ENCODE measurements at regions of chr7 and their contacts with region 1.

Region 1: DNA sequence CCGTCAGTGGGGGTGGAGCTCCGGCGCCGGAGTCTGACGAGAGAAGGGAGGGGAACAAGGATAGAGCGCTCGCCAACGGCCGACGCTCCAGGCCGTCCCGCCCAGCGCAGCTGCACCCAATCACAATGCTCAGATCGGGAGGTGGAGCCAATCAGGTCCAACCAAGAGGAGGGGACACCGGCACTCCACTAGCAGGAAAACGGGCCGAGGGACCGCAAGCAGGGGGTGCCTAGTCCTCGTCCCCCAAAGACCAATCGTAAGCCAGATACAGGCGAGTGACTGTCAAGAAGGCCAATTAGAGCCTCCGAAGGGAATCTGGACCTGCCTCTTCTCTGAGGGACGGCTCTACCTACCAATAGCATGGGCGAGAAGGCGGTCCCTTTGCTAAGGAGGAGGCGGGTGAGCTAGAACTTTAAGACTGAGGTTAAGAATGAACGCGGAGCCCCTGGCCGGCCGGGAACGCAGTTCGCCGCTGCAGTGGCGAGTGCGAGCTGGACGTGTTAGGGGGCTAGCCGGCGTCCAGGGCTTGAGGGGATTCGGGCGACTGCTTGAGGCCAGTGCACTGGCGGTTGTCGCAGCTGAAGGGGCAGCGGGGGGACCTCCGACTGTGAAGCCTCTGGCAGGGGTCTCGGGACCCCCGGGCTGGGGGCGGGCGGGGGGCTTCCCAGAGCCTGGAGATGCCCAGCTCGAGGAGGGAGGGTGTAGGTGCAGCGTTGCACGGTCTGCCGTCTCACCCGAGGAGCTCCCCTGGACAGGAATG is at the start of gene FBXO24:
- DNase-seq: peak; percentile 100
- ATAC-seq: peak; percentile 86
- H3K4me3 Mint-ChIP-seq: peak within 1 kb of the TSS; percentile 78
- H3K27ac Mint-ChIP-seq: peak within 1 kb of the TSS; percentile 82
- H3K4me1 Mint-ChIP-seq: peaks cover 26% of the 10 kb centered on the region
- H3K27me3 Mint-ChIP-seq: peaks cover 4% of the 10 kb centered on the region
- total RNA-seq, gene FBXO24: 1.4 to 2.1 TPM

Region 2: GRCh38 chr7:100435401-100436304 is 150.8 kb before region 1 on chr7:
- CTCF ChIA-PET with region 1: interaction called, 3 read pairs
- POLR2A ChIA-PET with region 1: interaction called, 5 read pairs
- intact Hi-C with region 1: loop called in 1 of 2 experiments (anchors 1 kb)
- DNase-seq: peak; percentile 70
- ATAC-seq: peak; percentile 30
- H3K4me3 Mint-ChIP-seq: peak overlapping the region; percentile 89
- H3K27ac Mint-ChIP-seq: peak overlapping the region; percentile 88
- H3K4me1 Mint-ChIP-seq: peaks cover 43% of the 10 kb centered on the region
- H3K27me3 Mint-ChIP-seq: no peaks in the 10 kb centered on the region

Region 3: GRCh38 chr7:100538654-100539435 is 47.6 kb before region 1 on chr7 and contains the start of gene AGFG2:
- CTCF ChIA-PET with region 1: interaction called, 3 read pairs
- POLR2A ChIA-PET with region 1: interaction called, 8 read pairs
- intact Hi-C with region 1: loop called (anchors 1 kb)
- DNase-seq: peak; percentile 100
- ATAC-seq: peak; percentile 92
- H3K4me3 Mint-ChIP-seq: peak within 1 kb of the TSS; percentile 98
- H3K27ac Mint-ChIP-seq: peak within 1 kb of the TSS; percentile 95
- H3K4me1 Mint-ChIP-seq: peaks cover 42% of the 10 kb centered on the region
- H3K27me3 Mint-ChIP-seq: no peaks in the 10 kb centered on the region
- total RNA-seq, gene AGFG2: 49.3 to 49.4 TPM

Region 4: DNA sequence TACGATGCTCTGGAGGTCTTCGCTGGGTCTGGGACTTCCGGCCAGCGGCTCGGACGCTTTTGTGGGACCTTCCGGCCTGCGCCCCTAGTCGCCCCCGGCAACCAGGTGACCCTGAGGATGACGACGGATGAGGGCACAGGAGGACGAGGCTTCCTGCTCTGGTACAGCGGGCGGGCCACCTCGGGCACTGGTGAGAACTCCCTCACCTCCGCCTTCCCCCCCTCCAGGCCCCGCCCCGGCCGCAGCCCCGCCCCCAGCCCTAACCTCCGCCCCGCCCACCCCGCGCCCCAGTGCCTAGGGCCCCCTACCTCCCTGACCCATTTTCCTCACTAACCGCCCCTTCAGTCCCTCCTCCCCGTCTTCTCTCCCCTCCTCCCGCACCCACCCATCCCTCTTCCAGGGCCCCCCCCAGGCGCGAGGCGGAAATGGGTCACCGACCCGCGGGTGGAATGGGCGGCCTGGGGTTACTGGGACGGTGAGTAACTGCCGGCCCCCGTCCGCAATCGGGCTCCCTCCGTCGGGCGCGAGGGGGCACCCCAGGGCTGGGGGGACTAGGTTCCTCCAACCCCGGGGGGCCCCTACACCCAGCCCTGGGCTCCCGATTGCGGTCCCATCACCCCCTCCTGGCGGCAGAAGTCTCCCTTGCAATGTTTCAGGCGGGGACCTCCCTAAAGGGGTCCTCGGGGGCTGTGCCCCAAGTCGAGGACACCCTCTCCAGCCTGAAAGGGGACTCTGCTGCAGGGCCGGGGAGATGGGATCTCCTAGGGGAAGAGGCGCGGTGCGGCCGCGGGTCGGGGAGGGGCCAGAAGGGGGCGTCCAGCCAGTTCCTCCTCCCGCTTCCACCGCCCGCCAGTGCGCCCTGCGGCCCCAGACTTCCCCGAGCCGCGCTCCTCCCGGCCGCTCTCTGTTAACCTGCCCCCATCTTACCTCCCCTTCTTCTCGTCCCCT is 17.9 kb after region 1 on chr7:
- CTCF ChIA-PET with region 1: interaction called, 6 read pairs
- POLR2A ChIA-PET with region 1: no interaction called
- intact Hi-C with region 1: loop called (anchors 1 to 2 kb)
- DNase-seq: peak; percentile 85
- ATAC-seq: peak; percentile 70
- H3K4me3 Mint-ChIP-seq: peak overlapping the region; percentile 78
- H3K27ac Mint-ChIP-seq: peak overlapping the region; percentile 82
- H3K4me1 Mint-ChIP-seq: peaks cover 15% of the 10 kb centered on the region
- H3K27me3 Mint-ChIP-seq: peaks cover 3% of the 10 kb centered on the region

Region 5: DNA sequence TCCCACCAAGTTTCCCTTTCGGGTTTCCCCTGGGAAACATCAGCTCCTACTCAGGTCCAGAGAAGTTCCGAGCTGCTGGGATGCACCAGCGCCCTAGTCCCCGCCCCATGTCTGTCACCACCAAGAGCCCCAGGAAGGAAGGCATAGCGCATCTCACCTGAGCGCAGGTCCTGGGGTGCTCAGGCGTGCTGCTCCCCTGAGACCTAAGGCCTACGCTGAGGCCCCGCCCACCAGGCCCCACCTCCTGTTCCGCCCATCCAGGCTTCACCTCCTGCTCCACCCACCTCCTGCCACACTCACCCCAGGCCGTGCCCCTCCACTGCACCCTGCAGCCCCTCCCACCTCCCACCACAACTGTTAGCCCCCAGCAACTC is 56.1 kb after region 1 on chr7:
- CTCF ChIA-PET with region 1: no interaction called
- POLR2A ChIA-PET with region 1: no interaction called
- intact Hi-C with region 1: no loop called
- DNase-seq: peak; percentile 55
- ATAC-seq: peak; percentile 68
- H3K4me3 Mint-ChIP-seq: no peak overlapping the region
- H3K27ac Mint-ChIP-seq: no peak overlapping the region
- H3K4me1 Mint-ChIP-seq: no peaks in the 10 kb centered on the region
- H3K27me3 Mint-ChIP-seq: no peaks in the 10 kb centered on the region

Region 6: DNA sequence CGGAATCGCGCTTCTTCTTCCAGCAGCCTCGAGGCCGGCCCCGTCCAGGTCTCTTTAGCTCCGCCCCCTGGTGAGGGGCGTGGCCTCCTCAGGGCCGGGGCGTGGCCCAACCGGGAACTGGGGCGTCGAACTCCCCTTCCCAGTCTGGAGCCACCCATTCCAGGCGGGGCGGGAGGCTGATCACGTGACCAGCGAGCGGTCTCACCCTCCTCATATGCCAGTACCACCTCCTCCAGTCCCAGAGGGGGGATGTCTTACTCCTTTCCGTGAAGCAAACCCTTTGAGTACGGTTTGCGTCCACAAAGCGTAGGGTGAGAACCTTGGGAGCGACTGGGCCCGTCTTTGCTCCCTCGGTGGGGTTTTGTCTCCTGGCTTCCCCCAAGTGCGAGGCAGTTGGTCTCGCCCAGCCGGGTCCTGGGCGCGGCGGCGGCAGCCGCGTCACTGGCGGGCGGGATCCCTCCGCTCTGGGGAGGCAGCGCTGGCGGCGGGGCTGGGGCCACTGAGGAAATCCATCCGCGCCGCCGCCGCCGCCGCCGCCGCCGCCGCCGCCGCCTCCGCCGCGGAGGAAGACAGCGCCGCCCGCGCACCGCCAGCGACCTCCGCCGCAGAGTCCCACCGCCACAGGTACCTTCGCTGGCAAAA is 87.0 kb after region 1 on chr7 and contains the start of gene GNB2:
- CTCF ChIA-PET with region 1: interaction called, 3 read pairs
- POLR2A ChIA-PET with region 1: no interaction called
- intact Hi-C with region 1: loop called (anchors 1 kb)
- DNase-seq: peak; percentile 99
- ATAC-seq: peak; percentile 78
- H3K4me3 Mint-ChIP-seq: peak within 1 kb of the TSS; percentile 94
- H3K27ac Mint-ChIP-seq: peak within 1 kb of the TSS; percentile 93
- H3K4me1 Mint-ChIP-seq: peaks cover 12% of the 10 kb centered on the region
- H3K27me3 Mint-ChIP-seq: no peaks in the 10 kb centered on the region
- total RNA-seq, gene GNB2: 172 to 200 TPM

Region 7: GRCh38 chr7:100852048-100852872 is 265.8 kb after region 1 on chr7 and contains the start of gene SLC12A9:
- CTCF ChIA-PET with region 1: interaction called, 4 read pairs
- POLR2A ChIA-PET with region 1: no interaction called
- intact Hi-C with region 1: loop called in 1 of 2 experiments (anchors 1 kb)
- DNase-seq: peak; percentile 93
- ATAC-seq: peak; percentile 98
- H3K4me3 Mint-ChIP-seq: peak within 1 kb of the TSS; percentile 87
- H3K27ac Mint-ChIP-seq: peak within 1 kb of the TSS; percentile 91
- H3K4me1 Mint-ChIP-seq: peaks cover 11% of the 10 kb centered on the region
- H3K27me3 Mint-ChIP-seq: no peaks in the 10 kb centered on the region
- total RNA-seq, gene SLC12A9: 13.6 to 15.6 TPM

Measured in activated CD4-positive, alpha-beta T cell treated with anti-CD3 and anti-CD28 coated beads for 36 hours (primary cell).